AG04449 (cell line): ENCODE measurements at regions of chr10 and their contacts with region 1.

Region 1: GRCh38 chr10:70673043-70673928 is 980 bp downstream of the ADAMTS14 start:
- DNase-seq: peak; percentile 63
- H3K4me3 ChIP-seq: peak overlapping the region; percentile 60
- CTCF ChIP-seq: no peak

Region 2: DNA sequence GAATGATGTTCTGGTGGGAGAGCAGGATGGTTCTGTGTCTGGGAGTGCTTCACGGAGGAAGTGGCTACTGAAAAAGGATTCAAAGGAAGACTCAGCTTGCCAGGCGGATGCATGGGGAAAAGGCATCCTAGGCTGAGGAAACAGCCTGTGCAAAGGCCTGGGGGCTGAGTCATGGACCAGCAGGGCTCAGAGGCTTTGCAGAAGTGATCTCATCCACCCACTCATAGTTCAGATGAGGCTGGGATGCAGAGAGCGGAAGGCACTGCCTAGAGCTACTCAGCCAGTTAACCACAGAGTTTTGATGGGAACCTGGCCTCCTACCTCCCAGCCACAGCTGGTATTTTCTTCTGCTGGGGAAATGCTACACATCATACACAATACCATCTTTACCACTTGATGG is 16.8 kb before region 1 on chr10:
- CTCF ChIA-PET with region 1: interaction called, 3 read pairs
- POLR2A ChIA-PET with region 1: interaction called, 11 read pairs
- DNase-seq: peak; percentile 97
- H3K4me3 ChIP-seq: no peak overlapping the region
- CTCF ChIP-seq: no peak